Activated T-helper 1 cell treated with anti-CD3 and anti-CD28 coated beads, Interleukin-12 subunit alpha, Interleukin-12 subunit beta, Interleukin-2, Interleukin-4 antibody, amounts not matched to agents 30 ng/mL and 10 ng/mL and 1 ng/mL, durations not matched to agents 14 hours and 24 hours and 36 hours (primary cell): ENCODE measurements at regions of chr14 and their contacts with region 1.

Region 1: DNA sequence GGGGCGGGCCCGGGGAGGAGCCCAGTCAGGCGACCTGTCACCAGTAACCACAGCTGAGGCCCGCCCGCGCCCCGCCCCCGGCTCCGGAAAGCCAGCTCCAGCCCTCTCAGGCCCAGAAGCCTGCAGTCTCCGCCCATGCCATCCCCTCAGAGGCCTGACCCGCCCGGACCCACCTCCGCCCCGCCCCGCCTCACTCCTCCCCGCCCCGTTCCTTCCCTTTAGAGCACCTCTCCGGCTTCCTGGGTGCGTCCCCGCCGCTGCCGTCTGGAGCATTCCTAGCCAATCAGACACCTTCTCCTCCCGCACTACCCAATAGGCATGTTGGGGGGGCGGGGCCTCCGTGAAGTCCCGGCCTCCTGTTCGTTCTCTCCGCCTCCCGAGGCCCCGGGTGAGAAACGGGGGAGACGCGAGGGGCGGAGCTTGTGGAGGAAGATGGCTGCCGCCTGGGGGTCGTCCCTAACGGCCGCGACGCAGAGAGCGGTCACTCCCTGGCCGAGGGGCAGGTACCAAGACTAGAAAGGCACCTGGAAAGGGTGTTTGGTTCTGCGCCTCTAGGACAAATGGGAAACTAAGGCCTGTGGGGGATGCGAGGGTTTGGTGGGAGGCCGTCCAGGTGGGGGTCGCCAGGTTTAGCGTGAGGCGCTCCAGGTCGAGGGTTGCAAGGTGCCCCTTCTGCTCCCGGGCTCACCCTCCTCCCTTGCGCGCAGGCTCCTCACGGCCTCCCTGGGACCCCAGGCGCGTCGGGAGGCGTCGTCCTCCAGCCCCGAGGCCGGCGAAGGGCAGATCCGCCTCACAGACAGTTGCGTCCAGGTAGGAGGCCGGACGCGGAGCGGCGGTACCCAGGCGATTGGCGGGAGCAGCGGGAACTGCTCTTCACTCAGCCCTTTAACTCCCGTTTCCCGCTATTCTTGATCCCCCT is at the start of gene ISCA2:
- DNase-seq: peak; percentile 99
- H3K4me3 Mint-ChIP-seq: no peak within 1 kb of the TSS
- H3K27ac Mint-ChIP-seq: peak within 1 kb of the TSS; percentile 87
- H3K4me1 Mint-ChIP-seq: peaks cover 24% of the 10 kb centered on the region
- H3K27me3 Mint-ChIP-seq: no peaks in the 10 kb centered on the region
- total RNA-seq, gene ISCA2: 18.8 and 20.2 TPM in 2 replicates

Region 2: GRCh38 chr14:74084277-74085046 is 409.1 kb before region 1 on chr14 and contains the starts of genes ALDH6A1 and LIN52:
- intact Hi-C with region 1: loop called (anchors 1 kb)
- DNase-seq: peak; percentile 100
- H3K4me3 Mint-ChIP-seq: peak within 1 kb of the TSS; percentile 94
- H3K27ac Mint-ChIP-seq: peak within 1 kb of the TSS; percentile 94
- H3K4me1 Mint-ChIP-seq: peaks cover 45% of the 10 kb centered on the region
- H3K27me3 Mint-ChIP-seq: peaks cover 4% of the 10 kb centered on the region
- total RNA-seq, gene ALDH6A1: 10.8 and 11.0 TPM in 2 replicates
- total RNA-seq, gene LIN52: 15.9 and 17.2 TPM in 2 replicates

Region 3: GRCh38 chr14:74302634-74303577 is 190.7 kb before region 1 on chr14 and contains the start of gene ABCD4:
- intact Hi-C with region 1: loop called (anchors 2 kb)
- DNase-seq: peak; percentile 79
- H3K4me3 Mint-ChIP-seq: peak within 1 kb of the TSS; percentile 99
- H3K27ac Mint-ChIP-seq: peak within 1 kb of the TSS; percentile 86
- H3K4me1 Mint-ChIP-seq: peaks cover 22% of the 10 kb centered on the region
- H3K27me3 Mint-ChIP-seq: no peaks in the 10 kb centered on the region
- total RNA-seq, gene ABCD4: 38.8 and 44.4 TPM in 2 replicates

Region 4: DNA sequence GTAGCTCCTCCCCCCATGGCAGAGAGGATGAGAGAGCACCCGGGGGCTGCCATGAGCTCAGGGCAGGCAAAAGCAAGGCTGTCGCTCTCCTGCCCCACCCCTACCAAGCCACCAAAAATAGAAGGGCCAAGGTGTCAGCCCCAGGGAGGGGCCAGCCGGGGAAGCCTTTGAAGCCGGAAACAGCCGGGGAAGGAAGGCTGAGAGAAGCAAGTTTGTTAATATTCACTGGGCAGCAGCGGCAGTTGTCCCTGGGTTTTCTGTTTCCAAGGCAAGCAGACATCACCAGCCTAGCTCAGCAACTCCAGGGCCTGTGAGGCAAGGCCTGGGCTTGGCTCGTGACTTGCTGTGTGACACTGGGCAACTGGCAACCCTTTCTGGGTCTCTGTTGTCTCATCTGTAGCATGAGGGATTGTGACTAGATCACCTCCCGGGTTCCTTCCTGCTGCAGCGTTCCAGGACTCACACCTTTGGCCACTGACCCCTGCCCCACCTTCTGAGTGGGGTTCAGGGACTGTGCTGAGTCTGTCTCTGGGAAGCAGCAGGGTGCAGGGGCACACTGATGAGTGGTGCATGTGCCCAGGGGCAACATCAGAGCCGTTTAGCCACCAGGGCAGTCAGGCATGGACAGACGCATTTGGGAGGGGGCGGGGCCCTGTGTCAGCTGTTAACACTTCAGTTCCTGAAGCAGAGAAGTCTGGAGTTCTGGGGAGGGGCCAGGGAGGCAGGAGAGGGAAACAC is 91.9 kb before region 1 on chr14:
- intact Hi-C with region 1: loop called (anchors 2 kb)
- DNase-seq: peak; percentile 67
- H3K4me3 Mint-ChIP-seq: peak overlapping the region; percentile 50
- H3K27ac Mint-ChIP-seq: peak overlapping the region; percentile 76
- H3K4me1 Mint-ChIP-seq: peaks cover 24% of the 10 kb centered on the region
- H3K27me3 Mint-ChIP-seq: peaks cover 15% of the 10 kb centered on the region

Region 5: DNA sequence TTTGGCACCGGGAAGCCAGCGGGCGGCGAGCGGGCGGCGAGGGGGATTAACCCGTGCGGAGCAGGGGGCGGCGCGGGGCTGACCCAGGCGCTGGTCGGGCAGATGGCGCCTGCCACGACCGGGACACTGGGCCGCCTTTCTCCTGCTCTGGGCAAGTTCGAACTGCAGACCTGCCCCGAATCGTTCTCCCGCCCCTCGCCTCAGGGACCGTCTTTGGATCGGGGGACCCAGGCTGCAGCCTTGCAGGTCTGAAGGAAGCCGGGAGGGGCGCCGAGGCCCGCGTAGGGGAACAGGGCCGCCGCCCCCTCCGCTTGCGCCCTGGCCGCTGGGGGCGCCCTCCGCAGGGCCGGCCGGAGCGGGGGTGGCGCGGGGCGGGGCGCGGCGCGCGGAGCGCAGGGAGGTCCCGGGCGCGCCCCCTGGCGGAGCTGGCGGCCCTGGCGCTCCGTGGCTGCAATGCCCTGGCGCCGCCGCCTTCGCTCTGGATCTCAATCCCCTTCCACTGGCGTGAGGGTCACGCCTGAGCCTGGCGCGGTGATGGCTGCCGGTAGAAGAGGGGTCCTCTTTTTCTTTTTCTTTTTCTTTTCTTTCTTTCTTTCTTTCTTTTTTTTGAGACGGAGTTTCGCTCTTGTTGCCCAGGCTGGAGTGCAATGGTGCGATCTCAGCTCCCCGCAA is 118.9 kb after region 1 on chr14:
- intact Hi-C with region 1: loop called (anchors 2 kb)
- DNase-seq: peak; percentile 80
- H3K4me3 Mint-ChIP-seq: peak overlapping the region; percentile 73
- H3K27ac Mint-ChIP-seq: no peak overlapping the region
- H3K4me1 Mint-ChIP-seq: peaks cover 48% of the 10 kb centered on the region
- H3K27me3 Mint-ChIP-seq: peaks cover 43% of the 10 kb centered on the region

Region 6: DNA sequence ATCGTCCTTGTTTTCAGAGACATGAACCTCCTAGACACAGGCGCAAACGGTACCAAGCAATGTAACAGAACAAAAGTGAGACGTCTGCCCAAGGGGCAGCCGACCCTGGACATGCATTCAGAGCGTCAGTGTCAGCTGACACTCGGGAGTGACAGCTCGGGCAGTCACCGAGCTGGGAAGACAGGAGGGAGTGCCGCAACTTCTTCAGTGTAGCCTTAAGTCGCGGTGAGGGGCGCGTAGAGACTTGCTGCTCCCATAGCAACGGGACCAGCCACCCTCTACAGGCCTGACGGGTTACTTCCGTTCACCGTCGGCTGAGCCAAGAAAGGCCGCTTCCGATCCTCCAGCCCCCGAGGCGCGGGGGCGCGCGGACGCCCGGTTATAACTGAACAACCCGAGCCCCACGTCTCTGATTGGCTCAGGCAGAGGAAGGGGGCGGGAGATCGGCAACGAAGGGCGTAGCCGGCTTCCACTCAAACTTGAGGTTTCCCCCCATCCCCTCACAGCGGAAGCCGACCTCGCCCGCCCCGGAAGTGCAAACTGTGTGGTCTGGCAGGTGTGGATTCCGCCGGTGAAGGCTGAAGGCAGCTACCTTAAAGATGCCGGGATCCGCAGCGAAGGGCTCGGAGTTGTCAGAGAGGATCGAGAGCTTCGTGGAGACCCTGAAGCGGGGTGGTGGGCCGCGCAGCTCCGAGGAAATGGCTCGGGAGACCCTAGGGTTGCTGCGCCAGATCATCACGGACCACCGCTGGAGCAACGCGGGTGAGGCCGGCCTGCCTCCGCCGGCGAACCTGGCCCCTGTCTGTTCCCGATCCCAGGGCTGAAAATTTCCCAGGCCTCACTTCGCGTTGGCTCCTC is 509.0 kb after region 1 on chr14 and contains the start of gene EIF2B2:
- intact Hi-C with region 1: loop called (anchors 1 kb)
- DNase-seq: peak; percentile 99
- H3K4me3 Mint-ChIP-seq: peak within 1 kb of the TSS; percentile 98
- H3K27ac Mint-ChIP-seq: peak within 1 kb of the TSS; percentile 92
- H3K4me1 Mint-ChIP-seq: peaks cover 54% of the 10 kb centered on the region
- H3K27me3 Mint-ChIP-seq: peaks cover 10% of the 10 kb centered on the region
- total RNA-seq, gene EIF2B2: 52.8 and 54.3 TPM in 2 replicates